HepG2 (cell line): ENCODE measurements at regions of chr14 and their contacts with region 1.

Region 1: GRCh38 chr14:36553656-36554260 is 28.7 kb downstream of the NKX2-8 start:
- DNase-seq: peak; percentile 65
- ATAC-seq: peak; percentile 79
- H3K4me3 ChIP-seq: no peak overlapping the region
- H3K27ac ChIP-seq: no peak overlapping the region
- H3K4me1 ChIP-seq: peaks cover 9% of the 10 kb centered on the region
- H3K27me3 ChIP-seq: peaks cover 0 to 15% of the 10 kb centered on the region in 2 experiments; a peak in 2 of 5 replicates
- CTCF ChIP-seq: peak; percentile 72
- EP300 ChIP-seq: no peak
- POLR2A ChIP-seq: no peak
- RAD21 ChIP-seq: peak; percentile 55

Region 2: GRCh38 chr14:35883677-35884293 is 670.0 kb before region 1 on chr14:
- CTCF ChIA-PET with region 1: no interaction called
- POLR2A ChIA-PET with region 1: no interaction called
- in situ Hi-C with region 1: no loop called
- intact Hi-C with region 1: loop called (anchors 2 kb)
- DNase-seq: peak; percentile 50
- ATAC-seq: peak; percentile 83
- H3K4me3 ChIP-seq: no peak overlapping the region
- H3K27ac ChIP-seq: no peak overlapping the region
- H3K4me1 ChIP-seq: peaks cover 5% of the 10 kb centered on the region; the same call in 1 of the 2 replicates
- H3K27me3 ChIP-seq: no peaks in the 10 kb centered on the region; a peak in 1 of 5 replicates
- CTCF ChIP-seq: peak; percentile 82
- EP300 ChIP-seq: 0 out of 4 replicates have a peak, but pooled peaks of 1 of the 2 experiments have one; percentile 4
- POLR2A ChIP-seq: no peak
- RAD21 ChIP-seq: peak; percentile 21; the same call in 1 of the 2 replicates

Region 3: GRCh38 chr14:36207500-36207899 is 346.3 kb before region 1 on chr14:
- CTCF ChIA-PET with region 1: no interaction called
- POLR2A ChIA-PET with region 1: no interaction called
- in situ Hi-C with region 1: no loop called
- intact Hi-C with region 1: loop called (anchors 2 kb)
- DNase-seq: peak; percentile 35
- ATAC-seq: peak; percentile 70
- H3K4me3 ChIP-seq: no peak overlapping the region
- H3K27ac ChIP-seq: no peak overlapping the region
- H3K4me1 ChIP-seq: no peaks in the 10 kb centered on the region
- H3K27me3 ChIP-seq: peaks cover 2 to 37% of the 10 kb centered on the region in 2 experiments
- CTCF ChIP-seq: peak; percentile 53
- EP300 ChIP-seq: no peak
- POLR2A ChIP-seq: no peak
- RAD21 ChIP-seq: no peak

Region 4: DNA sequence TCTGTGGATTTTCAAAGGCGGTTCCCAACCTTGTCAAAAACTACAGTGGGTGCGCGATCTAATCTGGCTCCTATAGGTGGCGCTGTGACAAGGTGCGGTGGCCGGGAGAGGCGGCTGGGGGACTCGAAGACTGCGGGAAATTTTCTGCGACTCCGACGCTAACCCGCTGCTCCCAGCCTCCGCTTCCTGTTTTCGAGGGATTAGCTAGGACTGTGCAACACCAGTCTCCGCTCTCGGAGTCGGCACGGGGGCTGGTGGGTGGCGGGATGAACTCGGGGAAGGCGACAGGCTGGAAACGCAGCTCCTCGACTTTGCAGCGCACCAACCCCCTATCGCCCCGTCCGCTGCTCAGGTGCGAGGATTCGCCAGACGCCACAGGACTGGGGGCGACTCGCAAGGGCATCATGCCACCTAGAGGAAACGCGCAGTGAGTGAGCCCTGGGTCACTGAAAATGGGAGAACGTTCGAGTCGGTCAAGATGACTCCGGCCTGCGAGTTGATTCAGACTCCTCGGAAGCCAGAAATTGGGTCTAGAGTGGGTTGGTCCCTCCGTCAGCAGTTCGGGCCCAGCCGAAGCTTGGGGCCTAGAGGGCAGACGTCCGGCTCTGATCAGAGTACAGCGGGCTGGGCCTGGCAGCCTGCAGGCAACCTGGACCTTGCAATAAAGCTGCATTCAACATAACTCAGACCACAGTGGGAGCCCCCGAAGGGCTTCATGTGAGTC is 102.4 kb after region 1 on chr14:
- CTCF ChIA-PET with region 1: no interaction called
- POLR2A ChIA-PET with region 1: no interaction called
- in situ Hi-C with region 1: no loop called
- intact Hi-C with region 1: loop called (anchors 1 kb)
- DNase-seq: peak; percentile 52
- ATAC-seq: peak; percentile 52
- H3K4me3 ChIP-seq: peak overlapping the region in 1 of 3 experiments; percentile 32; a peak in 1 of 6 replicates
- H3K27ac ChIP-seq: no peak overlapping the region
- H3K4me1 ChIP-seq: peaks cover 23% of the 10 kb centered on the region
- H3K27me3 ChIP-seq: peaks cover 46 to 74% of the 10 kb centered on the region in 2 experiments
- CTCF ChIP-seq: peak; percentile 66
- EP300 ChIP-seq: no peak
- POLR2A ChIP-seq: no peak
- RAD21 ChIP-seq: peak; percentile 8; the same call in 1 of the 2 replicates

Region 5: GRCh38 chr14:37150414-37150813 is 596.7 kb after region 1 on chr14:
- CTCF ChIA-PET with region 1: interaction called, 24 read pairs
- POLR2A ChIA-PET with region 1: no interaction called
- in situ Hi-C with region 1: no loop called
- intact Hi-C with region 1: loop called (anchors 1 kb)
- DNase-seq: peak; percentile 63
- ATAC-seq: peak; percentile 75
- H3K4me3 ChIP-seq: no peak overlapping the region
- H3K27ac ChIP-seq: no peak overlapping the region
- H3K4me1 ChIP-seq: no peaks in the 10 kb centered on the region
- H3K27me3 ChIP-seq: no peaks in the 10 kb centered on the region
- CTCF ChIP-seq: peak; percentile 78
- EP300 ChIP-seq: no peak
- POLR2A ChIP-seq: no peak
- RAD21 ChIP-seq: no peak